ENCODE measurements at regions of chr7 and their contacts with region 1.

Region 1: DNA sequence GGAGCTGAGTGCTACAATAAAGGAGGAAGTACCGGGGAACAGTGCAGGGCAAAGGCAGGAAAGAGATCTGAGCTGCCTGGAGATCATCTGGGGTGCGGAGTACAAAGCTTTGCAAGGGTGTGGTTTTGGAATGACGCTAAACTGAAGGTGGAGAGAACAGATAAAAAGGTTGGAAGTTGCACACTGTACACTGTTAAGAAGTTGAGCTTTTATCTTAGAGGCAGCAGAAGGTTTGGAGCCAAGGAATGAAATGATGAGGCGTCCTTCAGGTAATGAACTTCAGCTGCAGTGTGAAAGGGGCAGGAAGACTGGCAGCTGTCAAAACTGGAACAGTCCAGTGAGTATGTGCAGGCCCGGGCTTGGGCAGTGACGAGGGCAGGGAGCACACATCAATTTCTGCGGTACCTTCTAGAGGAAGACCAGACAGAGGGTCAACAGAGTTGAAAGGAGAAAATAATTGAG is 7.2 kb upstream of the ANKRD61 start:
- DNase-seq: peak; percentile 43 to 93 (median 64)
- ATAC-seq: peak; percentile 86
- H3K4me3 ChIP-seq: no peak overlapping the region
- H3K27ac ChIP-seq: peak overlapping the region; percentile 74
- H3K4me1 ChIP-seq: peaks cover 33 to 34% of the 10 kb centered on the region in 2 experiments; a peak in 4 of 5 replicates
- H3K27me3 ChIP-seq: no peaks in the 10 kb centered on the region
- CTCF ChIP-seq: no peak
- EP300 ChIP-seq: peak; percentile 97
- POLR2A ChIP-seq: 0 out of 2 replicates have a peak, but pooled peaks have one; percentile 20
- RAD21 ChIP-seq: no peak

Region 2: GRCh38 chr7:6008668-6009611 is 15.1 kb before region 1 on chr7 and contains the starts of genes AIMP2 and PMS2:
- CTCF ChIA-PET with region 1: no interaction called
- POLR2A ChIA-PET with region 1: interaction called, 15 read pairs
- in situ Hi-C with region 1: no loop called
- intact Hi-C with region 1: loop called (anchors 2 kb)
- DNase-seq: peak; percentile 94 to 98 (median 96)
- ATAC-seq: peak; percentile 92
- H3K4me3 ChIP-seq: peak within 1 kb of the TSS; percentile 65
- H3K27ac ChIP-seq: peak within 1 kb of the TSS; percentile 99
- H3K4me1 ChIP-seq: peaks cover 12 to 15% of the 10 kb centered on the region in 2 experiments; a peak in 4 of 5 replicates
- H3K27me3 ChIP-seq: no peaks in the 10 kb centered on the region
- CTCF ChIP-seq: peak; percentile 20 to 37 (median 22); a peak in 4 of 6 replicates
- EP300 ChIP-seq: no peak
- POLR2A ChIP-seq: peak; percentile 96
- RAD21 ChIP-seq: peak; percentile 27 to 29; a peak in 3 of 4 replicates
- polyA plus RNA-seq, gene AIMP2: 47.5 to 63.5 TPM
- polyA plus RNA-seq, gene PMS2: 4.9 to 6.5 TPM